ENCODE measurements at regions of chr2 and their contacts with region 1.

Region 1: DNA sequence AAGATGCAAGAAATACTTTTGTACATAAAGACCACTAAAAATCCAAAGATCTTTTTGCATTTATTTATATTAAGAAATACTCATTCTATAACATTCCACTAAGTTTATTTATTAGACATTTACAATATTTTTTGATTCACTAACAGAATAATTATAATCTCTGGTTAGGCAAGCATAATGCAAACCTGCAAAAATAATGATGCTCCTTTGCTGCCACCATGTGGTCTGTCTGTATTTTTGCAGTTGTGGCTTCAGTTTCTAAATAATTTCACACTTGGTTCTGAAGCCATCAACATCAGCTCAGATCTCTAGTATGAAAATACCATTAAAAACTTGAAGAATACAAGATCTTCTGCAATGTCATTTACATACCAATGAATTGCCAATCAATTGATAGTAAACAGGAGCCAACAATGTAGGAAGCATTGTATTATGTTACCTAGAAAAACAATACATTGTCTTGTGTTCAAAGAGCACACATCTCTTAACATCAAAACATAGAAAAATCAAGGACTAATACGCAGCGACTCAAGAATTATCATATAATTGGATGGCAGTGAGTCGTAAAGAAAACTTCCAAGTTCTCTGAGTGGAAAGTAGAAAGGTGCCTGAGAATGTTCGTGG is 28.8 kb upstream of the WDR75 start:
- DNase-seq: peak in 1 of 2 donors; percentile 33
- ATAC-seq: peak in 7 of 8 donors; percentile 35 to 71 (median 62)
- H3K4me3 ChIP-seq: no peak overlapping the region
- H3K27ac ChIP-seq: peak overlapping the region in 5 of 10 donors; percentile 13 to 40 (median 31)
- H3K4me1 ChIP-seq: peaks cover 0 to 16% (median 0%) of the 10 kb centered on the region in 9 donors
- H3K27me3 ChIP-seq: no peaks in the 10 kb centered on the region
- CTCF ChIP-seq: peak; percentile 51 to 83 (median 77)

Region 2: DNA sequence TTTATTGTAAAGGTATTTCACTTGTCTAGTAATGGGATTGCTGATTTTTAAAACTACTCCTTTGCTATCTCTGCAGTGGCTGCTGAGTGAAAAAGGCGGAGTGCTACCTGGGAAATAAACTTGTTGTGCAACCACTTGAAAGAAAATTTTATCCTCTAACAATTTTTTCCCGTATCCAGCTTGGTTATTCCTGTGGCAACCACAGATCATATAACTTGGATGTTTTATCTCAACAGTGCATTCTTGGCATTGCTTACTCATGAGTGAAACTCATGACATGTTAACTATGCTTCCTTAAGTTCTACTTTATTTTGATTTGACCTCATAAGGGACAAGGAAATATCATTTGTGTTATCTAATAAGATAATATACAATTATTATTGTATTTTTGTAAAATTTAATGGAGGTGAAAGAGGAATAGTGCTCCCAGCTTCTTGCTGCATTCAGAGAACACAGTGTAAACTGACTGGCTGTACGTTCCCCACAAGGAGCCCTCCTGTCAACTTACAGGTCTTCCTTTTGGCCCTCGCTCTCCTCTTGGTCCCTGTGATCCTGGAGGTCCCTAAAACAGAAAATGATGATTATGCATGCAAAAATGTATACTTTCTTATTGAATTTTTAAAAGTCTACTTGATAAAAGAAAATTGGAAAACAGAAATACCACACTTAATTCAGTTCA is 315.5 kb before region 1 on chr2:
- intact Hi-C with region 1: loop called (anchors 2 to 10 kb)
- DNase-seq: no peak
- ATAC-seq: no peak
- H3K4me3 ChIP-seq: no peak overlapping the region
- H3K27ac ChIP-seq: no peak overlapping the region
- H3K4me1 ChIP-seq: peaks cover 0 to 28% (median 9%) of the 10 kb centered on the region in 9 donors
- H3K27me3 ChIP-seq: no peaks in the 10 kb centered on the region
- CTCF ChIP-seq: no peak